ENCODE measurements at regions of chr20 and their contacts with region 1.

Region 1: DNA sequence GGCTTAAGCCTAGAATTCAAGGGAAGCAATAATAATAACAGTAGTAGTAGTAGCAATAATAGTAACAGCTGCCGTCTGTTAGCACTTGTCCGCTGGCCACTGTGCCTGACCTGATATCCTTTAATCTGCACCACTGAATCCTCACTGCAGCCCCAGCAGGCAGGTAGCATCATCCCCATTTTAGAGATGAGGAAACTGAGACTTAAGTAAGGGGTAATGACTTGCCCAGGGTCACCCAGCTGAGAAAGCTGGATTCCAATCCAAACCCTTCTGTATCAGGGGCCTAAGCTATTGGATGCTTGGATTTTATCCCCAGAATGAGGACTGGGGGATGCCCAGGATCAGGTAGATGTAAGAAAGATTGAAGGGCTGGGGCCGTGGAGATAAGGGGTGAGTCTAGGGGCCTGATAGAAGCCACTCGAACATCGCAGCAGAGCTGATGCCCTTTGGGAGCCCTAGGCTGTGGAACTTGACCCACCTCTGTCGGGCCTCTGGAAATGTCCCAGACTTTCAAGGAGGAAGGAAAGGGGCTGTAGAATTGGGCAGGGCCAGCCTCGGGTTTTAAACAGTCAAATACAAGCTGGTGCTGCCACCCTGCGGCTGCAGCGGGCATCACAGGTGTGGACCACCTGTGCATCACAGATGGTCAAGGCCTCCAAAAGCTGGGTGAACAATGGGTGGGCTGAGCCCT is 102.1 kb upstream of the MYL9 start:
- DNase-seq: peak; percentile 83
- CTCF ChIP-seq: peak; percentile 98

Region 2: GRCh38 chr20:36199345-36200257 is 239.6 kb before region 1 on chr20:
- in situ Hi-C with region 1: loop called (anchors 25 kb)
- DNase-seq: peak; percentile 81
- CTCF ChIP-seq: peak; percentile 90

Measured in GM13977 (cell line).